WTC11 (cell line): ENCODE measurements at regions of chr11 and their contacts with region 1.

Region 1: DNA sequence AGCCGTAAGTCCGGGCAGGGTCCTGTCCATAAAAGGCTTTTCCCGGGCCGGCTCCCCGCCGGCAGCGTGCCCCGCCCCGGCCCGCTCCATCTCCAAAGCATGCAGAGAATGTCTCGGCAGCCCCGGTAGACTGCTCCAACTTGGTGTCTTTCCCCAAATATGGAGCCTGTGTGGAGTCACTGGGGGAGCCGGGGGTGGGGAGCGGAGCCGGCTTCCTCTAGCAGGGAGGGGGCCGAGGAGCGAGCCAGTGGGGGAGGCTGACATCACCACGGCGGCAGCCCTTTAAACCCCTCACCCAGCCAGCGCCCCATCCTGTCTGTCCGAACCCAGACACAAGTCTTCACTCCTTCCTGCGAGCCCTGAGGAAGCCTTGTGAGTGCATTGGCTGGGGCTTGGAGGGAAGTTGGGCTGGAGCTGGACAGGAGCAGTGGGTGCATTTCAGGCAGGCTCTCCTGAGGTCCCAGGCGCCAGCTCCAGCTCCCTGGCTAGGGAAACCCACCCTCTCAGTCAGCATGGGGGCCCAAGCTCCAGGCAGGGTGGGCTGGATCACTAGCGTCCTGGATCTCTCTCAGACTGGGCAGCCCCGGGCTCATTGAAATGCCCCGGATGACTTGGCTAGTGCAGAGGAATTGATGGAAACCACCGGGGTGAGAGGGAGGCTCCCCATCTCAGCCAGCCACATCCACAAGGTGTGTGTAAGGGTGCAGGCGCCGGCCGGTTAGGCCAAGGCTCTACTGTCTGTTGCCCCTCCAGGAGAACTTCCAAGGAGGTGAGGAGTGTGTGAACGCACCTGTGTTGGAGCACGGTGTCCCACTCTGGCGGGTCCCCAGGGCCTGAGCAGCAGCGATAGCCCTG is at the start of gene TAGLN:
- DNase-seq: peak; percentile 84
- ATAC-seq: peak; percentile 72
- H3K4me3 Mint-ChIP-seq: peak within 1 kb of the TSS; percentile 63
- H3K27ac Mint-ChIP-seq: peak within 1 kb of the TSS; percentile 83
- H3K4me1 Mint-ChIP-seq: peaks cover 36% of the 10 kb centered on the region
- H3K27me3 Mint-ChIP-seq: no peaks in the 10 kb centered on the region; the same call in 1 of the 2 replicates
- CTCF ChIP-seq: no peak
- total RNA-seq, gene TAGLN: 51.1 to 71.5 TPM (median 53.9 TPM) in 3 replicates

Region 2: DNA sequence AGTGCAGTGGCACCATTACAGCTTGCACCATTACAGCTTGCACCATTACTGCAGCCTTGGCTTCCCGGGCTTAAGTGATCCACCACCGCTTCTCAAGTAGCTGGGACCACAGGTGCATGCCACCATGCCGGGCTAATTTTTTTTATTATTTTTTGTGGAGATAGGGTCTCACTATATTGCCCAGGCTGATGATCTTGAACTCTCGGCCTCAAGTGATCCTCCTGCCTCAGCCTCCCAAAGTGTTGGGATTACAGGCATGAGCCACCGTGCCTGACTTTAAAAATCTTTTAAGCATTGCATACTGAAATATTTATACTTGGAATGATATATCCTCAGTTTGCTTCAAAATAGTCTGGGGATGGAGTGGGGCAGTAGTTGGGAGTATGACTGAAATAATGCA is 44.8 kb before region 1 on chr11:
- CTCF ChIA-PET with region 1: no interaction called
- POLR2A ChIA-PET with region 1: no interaction called
- DNase-seq: no peak
- ATAC-seq: no peak
- H3K4me3 Mint-ChIP-seq: no peak overlapping the region
- H3K27ac Mint-ChIP-seq: no peak overlapping the region
- H3K4me1 Mint-ChIP-seq: no peaks in the 10 kb centered on the region
- H3K27me3 Mint-ChIP-seq: no peaks in the 10 kb centered on the region
- CTCF ChIP-seq: no peak

Region 3: GRCh38 chr11:117226388-117227385 is 27.4 kb after region 1 on chr11:
- CTCF ChIA-PET with region 1: interaction called, 12 read pairs
- POLR2A ChIA-PET with region 1: interaction called, 3 read pairs
- DNase-seq: no peak
- ATAC-seq: peak; percentile 92
- H3K4me3 Mint-ChIP-seq: no peak overlapping the region
- H3K27ac Mint-ChIP-seq: no peak overlapping the region; the same call in 1 of the 2 replicates
- H3K4me1 Mint-ChIP-seq: peaks cover 14% of the 10 kb centered on the region
- H3K27me3 Mint-ChIP-seq: no peaks in the 10 kb centered on the region
- CTCF ChIP-seq: peak; percentile 52